Endothelial cell of umbilical vein (primary cell): ENCODE measurements at regions of chr18 and their contacts with region 1.

Region 1: GRCh38 chr18:27005589-27005988 is 140.1 kb upstream of the AQP4 start:
- DNase-seq: no peak
- H3K4me3 ChIP-seq: no peak overlapping the region
- H3K27ac ChIP-seq: no peak overlapping the region
- H3K4me1 ChIP-seq: no peaks in the 10 kb centered on the region
- H3K27me3 ChIP-seq: no peaks in the 10 kb centered on the region
- CTCF ChIP-seq: no peak
- POLR2A ChIP-seq: no peak

Region 2: DNA sequence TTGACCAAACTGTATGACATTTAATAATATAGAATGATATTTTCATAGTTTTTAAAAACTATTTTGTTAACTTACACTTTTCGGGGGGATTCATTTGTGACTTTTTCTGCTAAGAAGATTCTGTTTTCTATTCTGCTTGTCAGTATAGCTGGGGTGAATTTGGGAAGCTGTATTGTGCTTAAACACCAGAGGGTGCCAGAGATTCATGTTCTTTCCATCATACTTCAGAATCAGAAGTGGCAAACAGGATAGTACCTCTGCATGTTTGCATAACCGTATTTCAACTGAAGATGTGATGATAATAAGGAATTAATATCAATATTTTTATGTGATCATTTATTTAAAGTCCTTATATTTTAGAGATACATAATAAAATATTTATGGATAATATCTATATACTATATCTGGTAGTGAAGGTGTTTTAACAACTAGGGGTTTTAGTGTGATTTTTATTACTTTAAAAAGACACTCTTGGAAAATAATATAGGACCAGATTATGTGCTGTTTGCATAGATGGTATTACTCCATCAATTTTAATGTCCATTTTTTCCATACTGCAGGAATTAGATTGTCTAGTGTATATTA is 698.3 kb before region 1 on chr18:
- CTCF ChIA-PET with region 1: interaction called, 3 read pairs
- POLR2A ChIA-PET with region 1: no interaction called
- dilution Hi-C with region 1: no loop called
- intact Hi-C with region 1: loop called (anchors 5 kb)
- DNase-seq: peak; percentile 70
- H3K4me3 ChIP-seq: no peak overlapping the region
- H3K27ac ChIP-seq: no peak overlapping the region
- H3K4me1 ChIP-seq: peaks cover 3% of the 10 kb centered on the region
- H3K27me3 ChIP-seq: no peaks in the 10 kb centered on the region
- CTCF ChIP-seq: peak; percentile 43 to 57
- POLR2A ChIP-seq: no peak

Region 3: GRCh38 chr18:26621161-26622026 is 384.2 kb before region 1 on chr18:
- CTCF ChIA-PET with region 1: no interaction called
- POLR2A ChIA-PET with region 1: no interaction called
- dilution Hi-C with region 1: no loop called
- intact Hi-C with region 1: loop called (anchors 10 kb)
- DNase-seq: peak; percentile 15
- H3K4me3 ChIP-seq: no peak overlapping the region
- H3K27ac ChIP-seq: no peak overlapping the region
- H3K4me1 ChIP-seq: no peaks in the 10 kb centered on the region
- H3K27me3 ChIP-seq: no peaks in the 10 kb centered on the region
- CTCF ChIP-seq: peak; percentile 31 to 56
- POLR2A ChIP-seq: no peak